ENCODE measurements at regions of chr11 and their contacts with region 1.

Region 1: GRCh38 chr11:35662649-35663407 is at the start of gene TRIM44:
- DNase-seq: peak; percentile 59
- ATAC-seq: peak; percentile 89
- H3K4me3 ChIP-seq: peak within 1 kb of the TSS; percentile 54 to 73 (median 64)
- H3K27ac ChIP-seq: peak within 1 kb of the TSS; percentile 89
- H3K4me1 ChIP-seq: peaks cover 48% of the 10 kb centered on the region
- H3K27me3 ChIP-seq: peaks cover 0 to 16% of the 10 kb centered on the region in 2 experiments; a peak in 3 of 5 replicates
- CTCF ChIP-seq: no peak
- EP300 ChIP-seq: no peak
- POLR2A ChIP-seq: peak in 1 of 2 experiments; percentile 60; a peak in 3 of 4 replicates
- RAD21 ChIP-seq: no peak
- total RNA-seq, gene TRIM44: 22.7 and 25.6 TPM in 2 replicates

Region 2: DNA sequence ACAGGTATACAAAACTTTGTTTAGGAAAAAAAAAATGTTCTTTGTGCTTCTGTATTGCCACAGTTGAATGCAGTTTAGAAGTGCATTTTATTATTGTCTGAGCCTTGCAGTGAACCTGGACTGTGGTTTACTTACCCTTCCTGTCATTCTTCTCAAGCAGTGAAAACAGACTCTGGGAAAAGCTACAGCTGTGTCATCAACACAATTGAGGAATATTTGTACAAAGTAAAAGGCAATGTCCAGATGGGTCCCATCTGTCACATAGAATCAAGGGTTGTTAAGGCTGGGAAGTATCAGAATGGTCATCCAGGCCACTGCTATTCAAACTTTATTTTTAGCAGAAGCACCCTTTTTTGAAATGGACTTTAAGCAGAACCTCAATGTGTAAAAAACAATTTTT is 73.1 kb after region 1 on chr11:
- CTCF ChIA-PET with region 1: no interaction called
- POLR2A ChIA-PET with region 1: no interaction called
- in situ Hi-C with region 1: loop called (anchors 10 kb)
- intact Hi-C with region 1: no loop called
- DNase-seq: no peak
- ATAC-seq: no peak
- H3K4me3 ChIP-seq: no peak overlapping the region
- H3K27ac ChIP-seq: no peak overlapping the region
- H3K4me1 ChIP-seq: peaks cover 38% of the 10 kb centered on the region
- H3K27me3 ChIP-seq: no peaks in the 10 kb centered on the region
- CTCF ChIP-seq: no peak
- EP300 ChIP-seq: no peak
- POLR2A ChIP-seq: no peak
- RAD21 ChIP-seq: no peak

Measured in HepG2 (cell line).